ENCODE measurements at regions of chr2 and their contacts with region 1.

Region 1: DNA sequence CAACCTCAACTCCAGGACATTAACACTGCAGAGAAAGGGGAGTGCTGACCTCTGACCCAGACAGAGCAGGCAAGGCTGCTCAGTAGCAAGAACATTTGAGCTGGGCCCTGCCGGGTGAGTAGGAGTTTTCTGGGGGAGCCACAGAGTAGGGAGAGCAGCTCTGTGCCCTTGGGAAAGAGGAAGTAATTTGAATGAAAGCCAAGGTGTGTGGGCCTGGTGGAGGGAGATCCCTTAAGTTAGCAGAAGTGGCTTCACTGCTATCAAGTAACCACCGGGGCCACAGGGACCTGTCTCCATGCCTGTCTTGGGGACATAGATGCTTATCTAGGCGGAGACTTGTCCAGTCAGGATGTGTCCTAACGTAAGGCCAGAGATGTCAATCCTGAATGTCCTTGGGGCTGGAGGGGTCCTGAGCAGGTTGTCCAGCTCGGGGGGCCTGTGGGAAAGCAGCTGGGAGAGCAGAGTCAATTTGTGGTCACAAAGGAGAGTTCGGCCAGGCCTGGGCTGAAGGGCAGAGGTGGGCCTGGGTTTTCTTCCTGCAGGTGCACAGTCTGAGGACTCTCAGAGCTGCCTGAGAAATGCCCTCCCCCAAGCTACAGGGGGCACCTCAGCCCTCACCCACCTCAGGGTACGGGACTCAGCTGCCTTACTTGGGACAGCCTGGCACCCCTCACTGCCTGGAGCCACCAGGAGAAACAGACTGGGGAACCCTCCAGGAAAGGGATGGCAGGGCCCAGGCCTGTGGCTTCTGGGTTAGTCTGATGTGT is 15.0 kb upstream of the OTOF start:
- DNase-seq: no peak
- H3K4me3 ChIP-seq: no peak overlapping the region
- H3K4me3 Mint-ChIP-seq: peak overlapping the region in 2 of 7 donors; percentile 2 to 22
- H3K27ac ChIP-seq: no peak overlapping the region
- H3K27ac Mint-ChIP-seq: peak overlapping the region in 1 of 8 donors; percentile 54
- H3K4me1 ChIP-seq: no peaks in the 10 kb centered on the region
- H3K4me1 Mint-ChIP-seq: peaks cover 0 to 8% (median 4%) of the 10 kb centered on the region in 3 donors
- H3K27me3 ChIP-seq: peaks cover under 1% of the 10 kb centered on the region
- H3K27me3 Mint-ChIP-seq: peaks cover 0 to 10% of the 10 kb centered on the region in 2 donors

Region 2: GRCh38 chr2:26442707-26443106 is 50.2 kb before region 1 on chr2:
- CTCF ChIA-PET with region 1: no interaction called
- POLR2A ChIA-PET with region 1: no interaction called
- DNase-seq: no peak
- H3K4me3 ChIP-seq: no peak overlapping the region
- H3K4me3 Mint-ChIP-seq: no peak overlapping the region
- H3K27ac ChIP-seq: no peak overlapping the region
- H3K27ac Mint-ChIP-seq: no peak overlapping the region
- H3K4me1 ChIP-seq: no peaks in the 10 kb centered on the region
- H3K4me1 Mint-ChIP-seq: no peaks in the 10 kb centered on the region
- H3K27me3 ChIP-seq: no peaks in the 10 kb centered on the region
- H3K27me3 Mint-ChIP-seq: peaks cover 5 to 8% of the 10 kb centered on the region in 2 donors

Region 3: DNA sequence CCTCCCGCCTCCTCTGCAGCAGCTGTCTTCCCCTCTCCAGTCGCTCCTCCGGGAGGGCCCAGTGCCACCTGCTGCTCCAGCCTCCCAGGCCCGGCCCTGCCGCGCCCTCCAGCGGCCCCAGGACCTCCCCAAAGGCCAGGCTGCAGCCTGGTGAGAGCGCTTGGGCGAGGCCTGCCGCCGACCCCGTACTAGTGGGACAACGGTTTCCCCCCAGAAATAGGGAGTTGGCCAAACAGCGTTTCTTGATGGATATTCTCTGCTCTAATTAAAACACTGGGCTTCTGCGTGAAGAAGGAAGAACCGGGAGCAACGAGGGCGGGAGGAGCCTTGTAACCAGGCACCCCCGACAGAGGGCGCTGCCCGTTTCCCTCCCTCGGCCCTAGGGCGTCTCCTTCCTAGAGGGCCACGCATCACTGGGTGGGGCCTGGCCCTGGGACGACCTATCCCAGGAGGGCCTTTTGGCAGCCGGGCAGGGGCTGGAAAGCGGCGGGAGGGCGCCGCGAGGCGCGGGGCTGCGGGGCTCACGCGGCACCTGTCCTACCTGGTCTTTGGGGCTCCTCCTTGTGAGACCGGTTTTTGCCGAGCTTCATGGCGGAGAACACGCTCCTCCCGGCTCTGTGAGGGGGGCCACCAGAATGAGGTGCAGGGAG is 10.4 kb after region 1 on chr2:
- CTCF ChIA-PET with region 1: interaction called, 11 read pairs
- POLR2A ChIA-PET with region 1: no interaction called
- DNase-seq: peak; percentile 61 to 81 (median 67)
- H3K4me3 ChIP-seq: peak overlapping the region; percentile 47
- H3K4me3 Mint-ChIP-seq: peak overlapping the region; percentile 74 to 89 (median 81)
- H3K27ac ChIP-seq: peak overlapping the region; percentile 32
- H3K27ac Mint-ChIP-seq: peak overlapping the region in 3 of 8 donors; percentile 17 to 89 (median 63)
- H3K4me1 ChIP-seq: peaks cover 6% of the 10 kb centered on the region
- H3K4me1 Mint-ChIP-seq: peaks cover 3 to 10% (median 8%) of the 10 kb centered on the region in 3 donors
- H3K27me3 ChIP-seq: peaks cover 3% of the 10 kb centered on the region
- H3K27me3 Mint-ChIP-seq: peaks cover 0 to 9% of the 10 kb centered on the region in 2 donors

Region 4: GRCh38 chr2:26519396-26520147 is 26.6 kb after region 1 on chr2:
- CTCF ChIA-PET with region 1: no interaction called
- POLR2A ChIA-PET with region 1: no interaction called
- DNase-seq: peak in 1 of 5 donors; percentile 32
- H3K4me3 ChIP-seq: no peak overlapping the region
- H3K4me3 Mint-ChIP-seq: no peak overlapping the region
- H3K27ac ChIP-seq: no peak overlapping the region
- H3K27ac Mint-ChIP-seq: peak overlapping the region in 1 of 8 donors; percentile 18
- H3K4me1 ChIP-seq: peaks cover 19% of the 10 kb centered on the region
- H3K4me1 Mint-ChIP-seq: peaks cover 0 to 11% (median 11%) of the 10 kb centered on the region in 3 donors
- H3K27me3 ChIP-seq: peaks cover 3% of the 10 kb centered on the region
- H3K27me3 Mint-ChIP-seq: peaks cover 7 to 22% of the 10 kb centered on the region in 2 donors

Measured in CD8-positive, alpha-beta memory T cell (primary cell).